OCI-LY7 (cell line): ENCODE measurements at regions of chr20 and their contacts with region 1.

Region 1: DNA sequence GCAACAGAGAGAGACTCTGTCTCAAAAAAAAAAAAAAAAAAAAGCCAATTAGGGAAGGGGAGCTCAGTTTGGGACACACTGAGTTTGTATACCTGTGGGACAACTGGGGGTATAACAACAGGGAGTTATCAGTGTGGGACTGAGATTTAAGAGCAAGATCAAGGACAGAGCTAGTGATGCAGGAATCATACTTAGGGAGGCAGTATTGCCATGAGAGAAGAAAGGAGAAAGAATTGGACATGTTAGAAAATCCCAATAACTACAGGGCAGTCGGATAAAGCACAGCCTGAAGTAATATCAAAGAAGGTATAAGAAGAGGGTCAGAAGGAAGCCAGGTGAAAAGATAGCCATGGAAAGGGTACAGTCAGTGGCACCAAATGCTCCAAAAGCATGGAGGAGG is 121.2 kb downstream of the PTPRT start:
- DNase-seq: no peak
- H3K4me3 ChIP-seq: no peak overlapping the region
- H3K27ac ChIP-seq: no peak overlapping the region
- H3K4me1 ChIP-seq: no peaks in the 10 kb centered on the region
- CTCF ChIP-seq: no peak

Region 2: GRCh38 chr20:43046966-43047365 is 21.5 kb before region 1 on chr20:
- CTCF ChIA-PET with region 1: interaction called, 15 read pairs
- POLR2A ChIA-PET with region 1: no interaction called
- intact Hi-C with region 1: no loop called
- DNase-seq: no peak
- H3K4me3 ChIP-seq: no peak overlapping the region
- H3K27ac ChIP-seq: no peak overlapping the region
- H3K4me1 ChIP-seq: no peaks in the 10 kb centered on the region
- CTCF ChIP-seq: no peak